ENCODE measurements at regions of chr6 and their contacts with region 1.

Region 1: DNA sequence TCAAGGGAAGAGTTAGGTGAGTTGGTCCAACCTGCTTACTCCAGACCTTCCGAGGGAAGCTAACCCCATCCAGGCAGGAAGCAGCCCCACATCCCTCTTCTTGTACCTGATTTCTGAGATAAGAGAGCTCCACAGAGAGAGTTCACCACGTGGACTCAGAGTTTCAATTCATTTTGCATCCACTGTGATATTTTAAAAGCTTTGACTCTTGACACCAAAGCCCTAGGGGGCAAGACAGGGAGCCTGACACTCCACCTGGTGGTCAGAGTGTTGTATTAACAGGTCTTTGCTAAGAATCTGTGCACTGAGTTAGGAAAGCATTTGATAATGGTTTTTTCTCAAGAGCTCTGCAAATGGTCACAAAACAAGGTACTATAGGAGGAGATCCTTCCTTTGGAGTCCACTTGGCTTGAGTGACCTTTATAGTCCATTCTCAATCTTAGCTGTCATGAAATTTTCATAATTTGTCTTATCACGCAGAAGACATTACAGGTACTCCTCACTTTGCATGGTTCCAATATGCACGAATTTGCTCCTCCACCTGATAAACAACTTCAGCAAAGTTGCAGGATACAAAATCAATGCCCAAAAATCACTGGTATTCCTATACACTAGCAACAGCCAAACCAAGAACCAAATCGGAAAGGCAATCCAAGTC is 56.2 kb upstream of the RIPOR2 start:
- DNase-seq: peak; percentile 75
- H3K4me3 ChIP-seq: no peak overlapping the region
- H3K27ac ChIP-seq: no peak overlapping the region
- H3K4me1 ChIP-seq: no peaks in the 10 kb centered on the region
- H3K27me3 ChIP-seq: no peaks in the 10 kb centered on the region
- CTCF ChIP-seq: peak; percentile 77

Region 2: DNA sequence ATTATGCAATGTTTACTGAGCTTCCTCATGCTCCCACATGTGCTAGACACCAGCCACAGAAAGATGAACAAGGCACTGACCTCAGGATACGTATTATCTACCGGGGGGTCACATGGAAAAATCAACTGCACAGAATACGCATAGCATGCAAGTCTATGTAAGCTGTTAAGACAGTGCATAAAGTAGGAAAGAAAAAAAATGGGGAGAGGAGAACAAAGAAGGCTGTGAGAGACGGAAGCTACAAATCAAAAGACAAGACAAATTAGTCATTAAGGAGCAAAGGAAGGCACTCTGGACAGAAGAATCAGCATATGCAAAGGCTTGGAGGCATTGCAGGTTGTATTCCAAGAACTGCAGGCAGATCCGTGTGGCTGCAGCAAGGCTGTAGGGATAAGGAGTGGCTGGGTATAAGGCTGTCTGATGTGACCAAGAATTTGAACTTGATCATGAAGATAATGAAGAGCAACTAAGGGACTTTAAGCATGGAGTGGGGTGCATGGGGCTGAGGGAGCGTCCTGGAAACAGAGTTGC is 777.0 kb before region 1 on chr6:
- CTCF ChIA-PET with region 1: no interaction called
- POLR2A ChIA-PET with region 1: no interaction called
- intact Hi-C with region 1: no loop called
- DNase-seq: peak; percentile 25
- H3K4me3 ChIP-seq: no peak overlapping the region
- H3K27ac ChIP-seq: no peak overlapping the region
- H3K4me1 ChIP-seq: no peaks in the 10 kb centered on the region
- H3K27me3 ChIP-seq: no peaks in the 10 kb centered on the region
- CTCF ChIP-seq: no peak

Region 3: DNA sequence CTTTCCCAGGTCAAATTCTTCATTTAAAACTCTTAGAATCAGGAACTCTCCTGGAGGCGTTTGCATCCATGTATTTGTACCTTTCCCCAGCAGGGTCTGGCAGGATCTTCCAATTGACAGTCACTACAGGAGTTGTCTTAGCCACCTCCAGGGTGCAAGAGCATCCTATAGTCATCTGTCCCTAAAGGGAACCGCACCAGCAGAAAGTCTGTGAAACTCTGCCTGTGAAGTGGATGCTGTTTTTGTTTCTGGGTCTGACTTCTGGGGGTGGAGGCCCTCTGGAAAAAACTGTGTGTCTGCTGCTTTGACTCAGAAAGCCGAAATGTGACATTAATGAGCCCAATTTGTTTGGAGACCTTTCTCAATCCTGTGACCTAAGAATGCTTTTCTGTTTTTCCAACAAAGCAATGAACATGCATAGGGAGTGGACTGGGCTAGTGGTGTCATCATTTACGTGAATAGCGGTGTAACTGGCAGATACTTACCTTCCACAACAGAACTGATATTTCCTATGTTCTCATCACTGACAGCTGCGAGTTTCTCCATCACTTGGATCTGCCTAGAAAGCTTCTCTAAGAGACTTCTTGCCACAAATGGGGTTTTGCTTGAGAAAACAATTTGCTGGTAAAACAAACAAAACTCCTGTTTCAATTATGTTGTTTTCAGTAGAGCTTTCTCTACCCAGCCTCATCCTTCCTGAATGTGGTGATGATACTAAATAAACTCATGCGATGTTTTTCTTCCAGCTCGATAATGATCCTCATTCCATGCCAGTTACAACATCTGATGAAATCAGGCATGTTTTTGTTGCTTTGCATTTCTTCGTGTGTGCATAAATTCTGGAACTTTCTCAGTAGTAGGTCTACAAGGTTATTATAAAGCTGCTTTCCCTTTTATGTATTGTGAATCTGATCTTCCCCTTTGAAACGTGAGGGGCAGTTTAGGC is 159.9 kb before region 1 on chr6:
- CTCF ChIA-PET with region 1: no interaction called
- POLR2A ChIA-PET with region 1: no interaction called
- intact Hi-C with region 1: no loop called
- DNase-seq: no peak
- H3K4me3 ChIP-seq: no peak overlapping the region
- H3K27ac ChIP-seq: no peak overlapping the region
- H3K4me1 ChIP-seq: peaks cover 3% of the 10 kb centered on the region
- H3K27me3 ChIP-seq: no peaks in the 10 kb centered on the region
- CTCF ChIP-seq: no peak

Region 4: GRCh38 chr6:24855395-24856245 is 136.3 kb before region 1 on chr6:
- CTCF ChIA-PET with region 1: interaction called, 9 read pairs
- POLR2A ChIA-PET with region 1: no interaction called
- intact Hi-C with region 1: loop called (anchors 2 kb)
- DNase-seq: peak; percentile 79
- H3K4me3 ChIP-seq: no peak overlapping the region
- H3K27ac ChIP-seq: no peak overlapping the region
- H3K4me1 ChIP-seq: peaks cover 5% of the 10 kb centered on the region
- H3K27me3 ChIP-seq: no peaks in the 10 kb centered on the region
- CTCF ChIP-seq: peak; percentile 89

Region 5: DNA sequence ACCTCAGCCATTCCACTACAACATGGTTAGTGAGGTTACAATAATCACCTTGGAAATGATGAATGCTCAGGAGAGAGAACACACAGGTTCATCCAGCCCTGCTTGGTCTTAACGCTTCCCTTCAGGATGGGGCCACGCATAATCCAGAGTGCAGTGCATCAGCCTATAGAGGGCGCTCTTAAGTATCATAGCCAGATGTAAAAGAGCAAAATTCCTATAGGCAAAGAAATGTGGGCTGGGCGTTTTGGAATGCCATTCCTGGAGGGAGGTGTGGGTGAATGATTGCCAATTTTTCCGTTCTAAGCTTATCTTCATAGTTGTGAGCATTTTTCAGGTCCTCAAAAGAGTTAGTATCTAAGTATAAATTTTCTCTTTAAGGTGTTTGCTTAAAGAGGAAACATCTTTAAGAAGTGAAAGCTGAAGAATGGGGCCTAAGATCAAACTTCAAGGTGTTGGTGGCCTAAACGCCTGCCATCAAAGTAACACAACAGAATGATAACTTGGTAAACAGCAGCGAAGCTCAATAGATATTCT is 58.0 kb before region 1 on chr6:
- CTCF ChIA-PET with region 1: interaction called, 4 read pairs
- POLR2A ChIA-PET with region 1: no interaction called
- intact Hi-C with region 1: loop called (anchors 1 kb)
- DNase-seq: peak; percentile 69
- H3K4me3 ChIP-seq: no peak overlapping the region
- H3K27ac ChIP-seq: no peak overlapping the region
- H3K4me1 ChIP-seq: no peaks in the 10 kb centered on the region
- H3K27me3 ChIP-seq: no peaks in the 10 kb centered on the region
- CTCF ChIP-seq: peak; percentile 89